GM12878 (cell line): ENCODE measurements at regions of chr11 and their contacts with region 1.

Region 1: DNA sequence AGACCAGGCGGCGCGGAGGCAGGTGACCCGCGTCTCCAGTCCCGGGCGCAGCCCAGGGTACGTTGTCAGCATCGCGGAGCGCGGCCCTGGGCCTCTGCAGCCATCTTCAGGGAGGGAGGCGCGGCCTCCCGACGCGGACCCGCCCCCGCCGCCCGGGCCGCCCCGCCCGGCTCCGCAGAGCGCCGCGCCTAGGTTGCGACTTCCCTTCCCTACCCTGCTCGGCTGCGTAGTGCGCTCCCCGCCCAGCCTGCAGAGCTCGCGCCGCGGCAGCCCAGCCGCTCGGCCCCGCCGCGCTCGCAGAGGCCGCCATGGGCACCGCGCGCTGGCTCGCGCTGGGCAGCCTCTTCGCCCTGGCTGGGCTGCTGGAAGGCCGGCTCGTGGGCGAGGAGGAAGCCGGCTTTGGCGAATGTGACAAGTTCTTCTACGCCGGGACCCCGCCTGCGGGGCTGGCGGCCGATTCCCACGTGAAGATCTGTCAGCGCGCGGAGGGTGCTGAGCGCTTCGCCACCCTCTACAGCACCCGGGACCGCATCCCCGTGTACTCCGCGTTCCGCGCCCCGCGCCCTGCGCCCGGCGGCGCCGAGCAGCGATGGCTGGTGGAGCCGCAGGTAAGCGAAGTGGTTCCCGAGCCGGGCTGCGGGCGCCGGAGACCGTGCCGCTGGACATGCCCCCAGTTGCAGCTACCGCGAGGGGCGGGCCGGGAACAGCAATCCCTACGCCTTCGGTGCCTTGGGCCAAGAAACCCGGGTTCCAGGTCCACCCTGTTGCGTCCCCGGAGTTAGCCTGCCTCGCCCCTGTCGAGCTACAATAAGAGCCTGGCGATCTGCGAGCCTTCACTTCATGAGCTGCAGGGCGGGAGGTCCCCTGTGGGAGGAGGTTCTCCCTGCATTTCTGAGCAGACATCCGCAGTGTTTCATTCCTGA is at the start of gene ENDOD1:
- DNase-seq: no peak
- ATAC-seq: peak; percentile 93
- H3K4me3 ChIP-seq: peak within 1 kb of the TSS; percentile 94
- H3K27ac ChIP-seq: peak within 1 kb of the TSS; percentile 84
- H3K4me1 ChIP-seq: peaks cover 27% of the 10 kb centered on the region
- H3K27me3 ChIP-seq: no peaks in the 10 kb centered on the region
- CTCF ChIP-seq: peak in 1 of 3 experiments; percentile 9; a peak in 1 of 6 replicates
- EP300 ChIP-seq: no peak
- POLR2A ChIP-seq: peak; percentile 93
- RAD21 ChIP-seq: no peak
- polyA plus RNA-seq, gene ENDOD1: 6.0 to 6.4 TPM

Region 2: GRCh38 chr11:94613120-94613519 is 476.8 kb before region 1 on chr11:
- CTCF ChIA-PET with region 1: no interaction called
- POLR2A ChIA-PET with region 1: no interaction called
- RAD21 ChIA-PET with region 1: no interaction called
- SMC1A ChIA-PET with region 1: no interaction called
- in situ Hi-C with region 1: no loop called
- intact Hi-C with region 1: no loop called
- DNase-seq: no peak
- ATAC-seq: no peak
- H3K4me3 ChIP-seq: no peak overlapping the region
- H3K27ac ChIP-seq: no peak overlapping the region
- H3K4me1 ChIP-seq: no peaks in the 10 kb centered on the region
- H3K27me3 ChIP-seq: no peaks in the 10 kb centered on the region
- CTCF ChIP-seq: no peak
- EP300 ChIP-seq: no peak
- POLR2A ChIP-seq: no peak
- RAD21 ChIP-seq: no peak

Region 3: GRCh38 chr11:95035316-95035715 is 54.6 kb before region 1 on chr11:
- CTCF ChIA-PET with region 1: no interaction called
- POLR2A ChIA-PET with region 1: no interaction called
- RAD21 ChIA-PET with region 1: no interaction called
- SMC1A ChIA-PET with region 1: no interaction called
- in situ Hi-C with region 1: no loop called
- intact Hi-C with region 1: no loop called
- DNase-seq: no peak
- ATAC-seq: no peak
- H3K4me3 ChIP-seq: no peak overlapping the region
- H3K27ac ChIP-seq: no peak overlapping the region
- H3K4me1 ChIP-seq: no peaks in the 10 kb centered on the region
- H3K27me3 ChIP-seq: no peaks in the 10 kb centered on the region; a peak in 1 of 4 replicates
- CTCF ChIP-seq: no peak
- EP300 ChIP-seq: no peak
- POLR2A ChIP-seq: no peak
- RAD21 ChIP-seq: no peak

Region 4: GRCh38 chr11:95102733-95103132 is 12.9 kb after region 1 on chr11:
- CTCF ChIA-PET with region 1: interaction called, 37 read pairs
- POLR2A ChIA-PET with region 1: interaction called, 19 read pairs
- RAD21 ChIA-PET with region 1: interaction called, 13 read pairs
- SMC1A ChIA-PET with region 1: interaction called, 14 read pairs
- in situ Hi-C with region 1: no loop called
- intact Hi-C with region 1: no loop called
- DNase-seq: no peak
- ATAC-seq: no peak
- H3K4me3 ChIP-seq: no peak overlapping the region
- H3K27ac ChIP-seq: no peak overlapping the region
- H3K4me1 ChIP-seq: no peaks in the 10 kb centered on the region
- H3K27me3 ChIP-seq: no peaks in the 10 kb centered on the region
- CTCF ChIP-seq: no peak
- EP300 ChIP-seq: no peak
- POLR2A ChIP-seq: no peak
- RAD21 ChIP-seq: no peak

Region 5: GRCh38 chr11:95138448-95138847 is 48.6 kb after region 1 on chr11:
- CTCF ChIA-PET with region 1: interaction called, 24 read pairs
- POLR2A ChIA-PET with region 1: interaction called, 3 read pairs
- RAD21 ChIA-PET with region 1: interaction called, 6 read pairs
- SMC1A ChIA-PET with region 1: interaction called, 41 read pairs
- in situ Hi-C with region 1: no loop called
- intact Hi-C with region 1: no loop called
- DNase-seq: no peak
- ATAC-seq: peak; percentile 97
- H3K4me3 ChIP-seq: no peak overlapping the region
- H3K27ac ChIP-seq: no peak overlapping the region
- H3K4me1 ChIP-seq: no peaks in the 10 kb centered on the region
- H3K27me3 ChIP-seq: 0 out of 4 replicates have a peak, but pooled peaks cover 0 to 2% of the 10 kb centered on the region in 2 experiments
- CTCF ChIP-seq: peak; percentile 36 to 65 (median 45); a peak in 5 of 6 replicates
- EP300 ChIP-seq: no peak
- POLR2A ChIP-seq: no peak
- RAD21 ChIP-seq: peak; percentile 84

Region 6: DNA sequence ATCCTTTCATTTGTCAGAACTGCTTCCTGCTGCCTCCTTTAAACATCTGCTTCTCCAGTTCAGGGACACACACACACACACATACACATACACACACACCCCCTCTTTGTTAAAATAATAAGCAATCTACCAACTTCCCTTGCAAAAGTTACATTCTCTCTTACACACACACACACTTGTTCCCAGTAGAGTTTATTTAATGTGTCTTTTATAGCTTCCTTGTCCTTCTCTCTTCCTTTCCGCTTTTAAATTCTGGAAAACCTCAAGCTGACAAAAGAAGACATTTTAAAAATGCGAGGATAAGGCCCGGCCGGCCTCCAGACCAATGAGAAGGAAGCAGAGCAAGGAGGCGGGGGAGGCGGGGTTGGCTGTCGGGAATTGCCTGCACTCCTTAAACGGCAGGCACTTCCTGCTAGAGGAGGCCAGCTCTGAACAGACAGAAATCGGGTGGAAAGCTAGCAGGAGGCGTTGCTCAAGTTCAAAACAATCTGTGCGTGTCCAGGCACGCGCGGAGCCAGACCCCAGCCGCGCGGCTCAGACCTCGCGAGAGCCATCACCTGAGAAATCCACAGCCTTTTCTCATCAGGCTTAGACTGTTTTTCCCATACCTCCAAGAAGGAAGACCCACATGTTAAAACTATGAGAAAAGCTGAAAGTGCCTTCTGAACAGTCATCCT is 1153.2 kb after region 1 on chr11:
- CTCF ChIA-PET with region 1: interaction called, 4 read pairs
- POLR2A ChIA-PET with region 1: no interaction called
- RAD21 ChIA-PET with region 1: no interaction called
- SMC1A ChIA-PET with region 1: no interaction called
- in situ Hi-C with region 1: loop called (anchors 10 kb)
- intact Hi-C with region 1: no loop called
- DNase-seq: peak; percentile 86
- ATAC-seq: peak; percentile 93
- H3K4me3 ChIP-seq: peak overlapping the region; percentile 60
- H3K27ac ChIP-seq: peak overlapping the region; percentile 68
- H3K4me1 ChIP-seq: peaks cover 14% of the 10 kb centered on the region; the same call in 1 of the 2 replicates
- H3K27me3 ChIP-seq: no peaks in the 10 kb centered on the region
- CTCF ChIP-seq: no peak
- EP300 ChIP-seq: no peak
- POLR2A ChIP-seq: peak; percentile 73
- RAD21 ChIP-seq: no peak; the same call in 1 of the 2 replicates